ENCODE measurements at regions of chr11 and their contacts with region 1.

Region 1: GRCh38 chr11:36265793-36266628 is 23.2 kb downstream of the COMMD9 start:
- DNase-seq: peak; percentile 52
- H3K4me3 ChIP-seq: no peak overlapping the region
- H3K27ac ChIP-seq: no peak overlapping the region
- H3K4me1 ChIP-seq: no peaks in the 10 kb centered on the region
- H3K27me3 ChIP-seq: no peaks in the 10 kb centered on the region
- CTCF ChIP-seq: peak; percentile 66

Region 2: GRCh38 chr11:35485656-35486322 is 780.2 kb before region 1 on chr11:
- intact Hi-C with region 1: loop called (anchors 10 kb)
- DNase-seq: peak; percentile 78
- H3K4me3 ChIP-seq: no peak overlapping the region
- H3K27ac ChIP-seq: no peak overlapping the region
- H3K4me1 ChIP-seq: no peaks in the 10 kb centered on the region
- H3K27me3 ChIP-seq: no peaks in the 10 kb centered on the region
- CTCF ChIP-seq: peak; percentile 94

Region 3: DNA sequence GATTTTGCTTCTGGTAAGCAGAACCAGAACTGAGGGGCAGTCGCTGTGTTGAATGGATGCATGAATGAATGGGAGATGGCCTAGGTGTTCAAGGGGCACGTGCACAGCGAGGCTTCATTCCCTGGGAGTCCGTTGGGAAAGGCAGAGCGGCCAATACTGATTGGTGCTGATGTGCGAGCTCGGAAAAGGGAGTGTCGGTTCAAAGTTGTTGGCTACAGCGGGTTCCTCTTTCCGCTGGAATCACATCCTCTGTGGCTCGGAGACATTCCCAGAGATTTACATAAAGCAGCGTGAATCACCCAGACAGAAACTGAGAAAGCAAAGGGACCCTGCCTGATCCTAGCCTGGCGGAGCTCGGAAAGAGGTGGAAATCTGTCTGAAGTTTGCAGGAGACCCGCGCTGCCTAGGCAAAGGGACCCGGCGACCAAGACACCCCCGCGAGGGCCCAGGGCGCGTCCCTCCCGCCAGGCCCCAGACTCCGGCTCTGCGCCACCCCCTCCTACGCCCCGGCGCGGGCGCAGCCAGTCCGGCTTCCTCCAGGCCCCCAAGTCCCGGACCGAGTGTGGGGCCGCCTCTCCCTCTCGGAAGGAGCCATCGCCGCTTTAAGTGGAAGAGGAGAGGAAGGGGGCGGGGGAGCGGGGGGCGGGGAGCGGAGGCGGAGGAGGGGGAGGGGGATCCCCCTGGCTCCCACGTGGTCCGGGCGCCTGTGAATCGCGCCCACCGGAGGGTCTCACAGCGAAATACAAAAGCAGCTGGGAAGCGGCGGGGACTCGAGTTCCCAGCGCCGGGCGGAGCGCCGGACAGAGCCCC is 648.1 kb before region 1 on chr11 and contains the start of gene FJX1:
- intact Hi-C with region 1: loop called (anchors 2 kb)
- DNase-seq: peak; percentile 21
- H3K4me3 ChIP-seq: peak within 1 kb of the TSS; percentile 36
- H3K27ac ChIP-seq: peak within 1 kb of the TSS; percentile 41
- H3K4me1 ChIP-seq: peaks cover 8% of the 10 kb centered on the region
- H3K27me3 ChIP-seq: peaks cover 40% of the 10 kb centered on the region
- CTCF ChIP-seq: no peak
- total RNA-seq, gene FJX1: 0.32 to 1.6 TPM

Region 4: GRCh38 chr11:35927730-35928129 is 338.3 kb before region 1 on chr11:
- intact Hi-C with region 1: no loop called
- DNase-seq: peak; percentile 21
- H3K4me3 ChIP-seq: no peak overlapping the region
- H3K27ac ChIP-seq: no peak overlapping the region
- H3K4me1 ChIP-seq: no peaks in the 10 kb centered on the region
- H3K27me3 ChIP-seq: no peaks in the 10 kb centered on the region
- CTCF ChIP-seq: no peak

Region 5: DNA sequence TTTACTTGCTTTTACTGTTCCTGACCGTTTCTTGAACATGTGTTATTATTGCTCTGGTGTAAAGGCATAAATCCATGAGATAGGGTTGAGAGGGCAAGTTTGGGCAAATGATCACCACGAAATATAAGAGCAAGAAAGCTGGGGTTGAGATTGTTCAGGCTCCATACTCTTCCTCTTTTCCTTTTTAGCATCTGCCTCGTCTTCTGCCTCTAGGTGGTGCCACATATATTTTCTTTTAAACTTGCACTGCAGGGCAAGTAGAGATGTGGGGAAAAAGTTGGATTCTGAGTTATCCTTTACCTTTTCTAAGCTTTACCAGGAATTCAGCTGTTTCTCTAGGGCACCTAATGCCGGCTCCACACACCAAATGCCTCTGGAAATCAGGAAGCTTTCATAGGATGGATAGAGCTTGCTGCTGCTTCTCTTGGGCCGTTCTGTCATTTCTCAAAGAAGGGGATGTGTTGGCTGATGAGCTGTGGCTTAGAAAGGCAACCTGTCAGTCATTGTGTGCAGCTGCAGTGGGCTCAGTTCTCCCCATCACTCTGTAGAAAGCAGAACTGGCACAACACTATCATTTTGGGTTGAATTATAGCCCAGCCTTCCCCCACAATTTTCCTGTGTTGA is 223.9 kb before region 1 on chr11:
- intact Hi-C with region 1: loop called (anchors 10 kb)
- DNase-seq: no peak
- H3K4me3 ChIP-seq: no peak overlapping the region
- H3K27ac ChIP-seq: no peak overlapping the region
- H3K4me1 ChIP-seq: no peaks in the 10 kb centered on the region
- H3K27me3 ChIP-seq: no peaks in the 10 kb centered on the region
- CTCF ChIP-seq: no peak

Region 6: GRCh38 chr11:36177836-36178235 is 88.2 kb before region 1 on chr11:
- intact Hi-C with region 1: no loop called
- DNase-seq: no peak
- H3K4me3 ChIP-seq: no peak overlapping the region
- H3K27ac ChIP-seq: no peak overlapping the region
- H3K4me1 ChIP-seq: no peaks in the 10 kb centered on the region
- H3K27me3 ChIP-seq: no peaks in the 10 kb centered on the region
- CTCF ChIP-seq: no peak

Region 7: GRCh38 chr11:36316049-36316772 is 50.2 kb after region 1 on chr11:
- intact Hi-C with region 1: no loop called
- DNase-seq: peak; percentile 59
- H3K4me3 ChIP-seq: no peak overlapping the region
- H3K27ac ChIP-seq: no peak overlapping the region
- H3K4me1 ChIP-seq: no peaks in the 10 kb centered on the region
- H3K27me3 ChIP-seq: no peaks in the 10 kb centered on the region
- CTCF ChIP-seq: no peak

Measured in colonic mucosa (tissue), 4 donors.